ENCODE measurements at regions of chr4 and their contacts with region 1.

Region 1: DNA sequence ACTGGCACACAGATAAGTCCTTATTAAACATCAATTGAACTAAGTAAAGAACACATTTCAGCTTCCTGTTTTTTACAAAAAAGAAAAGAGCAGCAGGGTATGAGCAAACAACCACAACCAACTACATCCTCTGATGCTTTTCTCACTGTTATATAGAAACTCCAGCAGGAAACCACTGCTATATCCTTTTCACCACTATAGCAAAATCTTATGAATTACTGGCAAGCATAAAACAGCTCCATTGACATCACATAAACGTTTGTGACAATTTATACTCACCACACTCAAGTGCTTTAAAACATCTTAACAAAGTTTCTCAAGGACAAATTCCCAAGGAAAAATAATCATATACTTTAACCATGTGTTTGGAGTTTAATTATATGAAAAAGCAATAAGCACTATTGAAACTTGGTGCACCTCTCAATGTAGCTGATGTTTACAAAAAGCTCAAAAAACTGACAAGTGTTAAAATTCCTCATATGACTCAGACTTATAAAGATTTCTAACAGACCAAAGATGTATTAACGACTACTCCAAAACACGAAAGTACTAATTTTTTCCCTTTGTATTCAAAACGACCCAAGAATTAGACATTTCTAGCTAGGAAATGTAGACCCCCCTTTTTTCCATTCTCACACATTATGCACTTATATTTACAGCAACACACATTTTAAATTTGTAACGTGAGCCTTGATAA is 12.9 kb downstream of the GPRIN3 start:
- DNase-seq: peak; percentile 81
- H3K4me3 Mint-ChIP-seq: peak overlapping the region; percentile 68
- H3K27ac Mint-ChIP-seq: peak overlapping the region; percentile 98
- H3K4me1 Mint-ChIP-seq: peaks cover 76% of the 10 kb centered on the region
- H3K27me3 Mint-ChIP-seq: no peaks in the 10 kb centered on the region

Region 2: DNA sequence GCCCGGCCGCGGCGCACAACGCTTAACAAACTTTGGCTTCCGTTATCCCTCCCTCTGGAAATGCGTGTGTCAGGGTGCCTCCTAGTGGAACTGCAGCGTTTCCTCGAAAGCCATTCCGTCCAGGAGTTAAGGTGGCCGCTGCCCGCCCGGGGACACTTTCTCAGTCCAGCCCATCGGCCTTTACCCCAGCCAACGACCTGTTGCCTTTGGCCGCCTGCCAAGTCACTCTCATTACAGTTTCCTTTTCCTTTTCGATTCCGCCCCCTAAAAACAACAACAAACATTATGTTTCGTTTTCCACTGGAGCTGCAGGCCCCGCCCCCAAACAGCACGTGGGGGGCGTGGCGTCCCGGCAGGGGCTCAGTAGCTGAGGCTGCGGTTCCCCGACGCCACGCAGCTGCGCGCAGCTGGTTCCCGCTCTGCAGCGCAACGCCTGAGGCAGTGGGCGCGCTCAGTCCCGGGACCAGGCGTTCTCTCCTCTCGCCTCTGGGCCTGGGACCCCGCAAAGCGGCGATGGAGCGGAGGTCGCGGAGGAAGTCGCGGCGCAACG is 837.9 kb before region 1 on chr4 and contains the start of gene HERC5:
- intact Hi-C with region 1: loop called (anchors 10 kb)
- DNase-seq: peak; percentile 98
- H3K4me3 Mint-ChIP-seq: peak within 1 kb of the TSS; percentile 93
- H3K27ac Mint-ChIP-seq: peak within 1 kb of the TSS; percentile 100
- H3K4me1 Mint-ChIP-seq: peaks cover 47% of the 10 kb centered on the region
- H3K27me3 Mint-ChIP-seq: no peaks in the 10 kb centered on the region
- total RNA-seq, gene HERC5: 18.1 and 19.7 TPM in 2 replicates

Region 3: DNA sequence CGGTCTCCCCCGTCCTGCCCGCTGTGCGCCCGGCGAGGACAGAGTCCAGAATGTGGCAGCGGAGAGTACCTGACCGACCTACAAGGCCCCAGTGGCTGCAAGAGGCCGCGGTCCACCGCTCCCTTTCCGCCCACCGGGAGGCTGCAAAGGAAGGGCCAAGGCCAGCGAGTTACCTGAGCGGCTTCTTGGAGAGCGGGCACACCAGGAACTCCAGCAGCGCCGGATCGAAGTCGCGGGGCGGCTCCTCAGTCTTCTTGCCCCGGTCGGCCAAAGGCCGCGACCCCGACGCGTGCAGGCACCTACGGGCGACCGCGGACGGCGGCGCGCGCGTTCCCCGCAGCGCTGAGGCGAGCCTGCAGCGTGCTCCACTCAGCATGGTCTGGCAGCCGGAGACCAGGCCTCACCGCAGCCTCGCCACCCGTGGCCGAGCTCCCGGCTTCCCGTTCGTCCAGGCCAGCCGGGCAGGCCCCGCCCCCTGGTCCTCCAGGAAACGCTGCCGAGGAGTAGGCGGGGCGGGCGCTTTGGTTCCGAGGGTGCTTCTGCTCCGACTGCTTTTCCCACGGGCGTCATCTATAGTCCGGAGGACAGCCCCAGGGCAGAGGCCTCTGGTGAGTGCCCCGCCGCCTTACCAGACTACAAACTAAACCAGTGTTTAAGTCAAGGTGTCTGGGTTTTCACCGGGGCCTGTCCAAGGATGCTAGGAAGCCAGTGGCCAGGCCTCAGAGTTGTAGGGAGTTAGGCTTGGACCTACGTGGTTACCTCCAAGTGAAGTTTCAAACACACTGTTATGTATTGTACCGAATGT is 771.2 kb before region 1 on chr4 and contains the start of gene PYURF:
- intact Hi-C with region 1: loop called (anchors 10 kb)
- DNase-seq: peak; percentile 94
- H3K4me3 Mint-ChIP-seq: peak within 1 kb of the TSS; percentile 98
- H3K27ac Mint-ChIP-seq: peak within 1 kb of the TSS; percentile 94
- H3K4me1 Mint-ChIP-seq: peaks cover 37% of the 10 kb centered on the region
- H3K27me3 Mint-ChIP-seq: no peaks in the 10 kb centered on the region
- total RNA-seq, gene PYURF: 54.6 and 57.0 TPM in 2 replicates

Region 4: GRCh38 chr4:89110986-89111832 is 183.5 kb before region 1 on chr4 and contains the start of gene TIGD2:
- intact Hi-C with region 1: loop called (anchors 5 kb)
- DNase-seq: peak; percentile 95
- H3K4me3 Mint-ChIP-seq: peak within 1 kb of the TSS; percentile 83
- H3K27ac Mint-ChIP-seq: peak within 1 kb of the TSS; percentile 76
- H3K4me1 Mint-ChIP-seq: peaks cover 22% of the 10 kb centered on the region
- H3K27me3 Mint-ChIP-seq: peaks cover 32% of the 10 kb centered on the region
- total RNA-seq, gene TIGD2: 2.6 and 3.5 TPM in 2 replicates

Region 5: GRCh38 chr4:89242864-89243732 is 51.6 kb before region 1 on chr4:
- intact Hi-C with region 1: loop called (anchors 1 kb)
- DNase-seq: peak; percentile 81
- H3K4me3 Mint-ChIP-seq: peak overlapping the region; percentile 55
- H3K27ac Mint-ChIP-seq: peak overlapping the region; percentile 94
- H3K4me1 Mint-ChIP-seq: peaks cover 48% of the 10 kb centered on the region
- H3K27me3 Mint-ChIP-seq: no peaks in the 10 kb centered on the region

Region 6: DNA sequence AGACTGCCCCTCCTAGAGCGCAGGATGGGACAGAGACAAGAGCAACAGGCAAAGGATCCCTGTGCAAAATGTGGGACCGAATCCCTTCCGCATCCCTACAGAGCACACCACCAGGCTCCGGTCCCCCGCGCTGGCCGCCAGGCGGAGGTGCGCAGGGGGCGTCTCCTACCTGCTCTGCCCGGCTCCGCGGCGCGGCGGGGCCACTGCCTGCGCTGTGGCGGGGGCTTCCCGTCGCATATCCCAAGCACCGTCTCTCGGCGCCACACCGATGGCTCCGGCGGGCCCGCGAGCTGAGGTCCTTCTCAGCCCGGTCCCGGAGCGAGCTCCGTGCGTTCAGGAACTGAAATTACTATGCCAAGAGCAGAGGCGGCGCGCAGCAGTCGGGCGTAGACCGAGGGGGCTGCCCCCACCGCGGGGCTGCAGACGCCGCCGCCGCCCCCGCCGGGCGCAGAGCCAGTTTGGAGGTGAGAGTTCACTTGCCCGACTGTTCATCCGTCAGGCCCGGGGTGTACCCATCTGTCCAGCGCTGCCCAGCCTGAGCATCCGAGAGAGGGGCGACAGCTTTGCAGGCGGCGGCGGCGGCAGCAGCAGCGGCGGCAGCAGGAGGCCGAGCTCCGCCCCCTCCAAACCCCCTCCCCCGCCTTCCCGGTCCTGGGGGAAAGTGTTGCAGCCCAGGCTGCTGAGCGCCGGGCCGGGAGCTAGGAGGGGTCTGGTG is 12.9 kb after region 1 on chr4 and contains the start of gene GPRIN3:
- intact Hi-C with region 1: loop called (anchors 1 kb)
- DNase-seq: peak; percentile 90
- H3K4me3 Mint-ChIP-seq: peak within 1 kb of the TSS; percentile 89
- H3K27ac Mint-ChIP-seq: peak within 1 kb of the TSS; percentile 95
- H3K4me1 Mint-ChIP-seq: peaks cover 56% of the 10 kb centered on the region
- H3K27me3 Mint-ChIP-seq: no peaks in the 10 kb centered on the region
- total RNA-seq, gene GPRIN3: 26.2 and 26.8 TPM in 2 replicates

Region 7: GRCh38 chr4:89434364-89434988 is 139.8 kb after region 1 on chr4:
- intact Hi-C with region 1: loop called (anchors 2 kb)
- DNase-seq: peak; percentile 71
- H3K4me3 Mint-ChIP-seq: no peak overlapping the region
- H3K27ac Mint-ChIP-seq: no peak overlapping the region
- H3K4me1 Mint-ChIP-seq: peaks cover 22% of the 10 kb centered on the region
- H3K27me3 Mint-ChIP-seq: peaks cover 3% of the 10 kb centered on the region